ENCODE measurements at regions of chr4 and their contacts with region 1.

Region 1: DNA sequence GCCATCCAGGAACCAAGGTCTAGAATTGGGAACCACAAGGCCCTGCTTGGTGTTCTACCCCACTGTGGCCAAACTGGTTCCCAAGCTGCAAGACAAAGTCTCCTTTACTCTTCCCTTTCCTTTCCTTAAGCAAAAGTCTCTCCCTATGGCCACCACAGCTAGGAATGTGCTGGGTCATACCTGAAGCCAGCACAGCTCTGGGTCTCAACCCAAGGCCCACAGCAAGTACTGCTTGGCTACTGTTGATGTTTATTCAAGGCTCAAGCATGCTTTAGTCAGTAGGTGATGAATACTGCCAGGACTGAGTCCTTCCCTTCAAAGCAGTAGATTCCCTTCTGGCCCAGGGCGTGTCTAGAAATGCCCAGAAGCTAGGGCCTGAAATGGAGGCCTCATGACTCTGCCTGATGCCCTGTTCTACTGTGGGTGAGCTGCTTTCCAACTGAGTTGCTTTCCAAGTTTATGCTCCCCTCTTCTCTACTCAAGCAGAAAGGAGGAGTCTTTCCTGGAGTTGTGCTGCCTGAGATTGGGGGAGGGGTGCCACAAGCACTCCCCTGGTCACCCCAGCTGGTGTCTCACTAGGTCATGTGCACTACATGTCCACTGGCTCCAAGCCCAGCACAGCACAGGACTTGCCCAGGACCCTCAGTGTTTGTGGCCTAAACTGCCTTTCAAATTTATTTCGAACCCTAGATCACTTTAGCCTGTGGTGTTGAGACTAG is 44.9 kb downstream of the STAP1 start:
- DNase-seq: no peak
- ATAC-seq: no peak
- H3K4me3 Mint-ChIP-seq: no peak overlapping the region
- H3K27ac Mint-ChIP-seq: peak overlapping the region; percentile 8
- H3K4me1 Mint-ChIP-seq: peaks cover 18% of the 10 kb centered on the region
- H3K27me3 Mint-ChIP-seq: no peaks in the 10 kb centered on the region
- CTCF ChIP-seq: no peak

Region 2: DNA sequence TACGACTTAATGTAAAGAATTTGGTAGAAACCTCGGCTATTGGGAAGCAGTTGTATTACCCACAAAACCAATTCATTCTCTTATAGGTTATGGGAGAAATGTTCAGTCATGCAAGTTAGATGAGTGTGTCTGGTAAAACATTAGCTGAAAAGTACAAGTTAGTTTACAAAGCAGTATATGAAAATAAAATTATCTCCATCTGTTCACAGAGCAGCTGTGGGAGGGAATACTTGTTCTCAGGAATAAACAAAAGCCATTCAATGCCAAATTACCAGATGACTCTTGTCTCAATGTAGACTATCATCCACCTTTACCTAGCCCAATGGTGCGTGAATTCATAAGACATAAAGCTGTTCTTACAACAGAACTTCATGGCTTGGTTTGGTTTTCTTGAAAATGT is 16.3 kb before region 1 on chr4:
- CTCF ChIA-PET with region 1: no interaction called
- POLR2A ChIA-PET with region 1: no interaction called
- intact Hi-C with region 1: loop called (anchors 2 kb)
- DNase-seq: no peak
- ATAC-seq: no peak
- H3K4me3 Mint-ChIP-seq: no peak overlapping the region
- H3K27ac Mint-ChIP-seq: no peak overlapping the region
- H3K4me1 Mint-ChIP-seq: peaks cover 14% of the 10 kb centered on the region
- H3K27me3 Mint-ChIP-seq: no peaks in the 10 kb centered on the region
- CTCF ChIP-seq: no peak

Measured in activated B cell treated with CpG ODN at 0.5 μM for 24 hours (primary cell).